ENCODE measurements at regions of chr11 and their contacts with region 1.

Region 1: DNA sequence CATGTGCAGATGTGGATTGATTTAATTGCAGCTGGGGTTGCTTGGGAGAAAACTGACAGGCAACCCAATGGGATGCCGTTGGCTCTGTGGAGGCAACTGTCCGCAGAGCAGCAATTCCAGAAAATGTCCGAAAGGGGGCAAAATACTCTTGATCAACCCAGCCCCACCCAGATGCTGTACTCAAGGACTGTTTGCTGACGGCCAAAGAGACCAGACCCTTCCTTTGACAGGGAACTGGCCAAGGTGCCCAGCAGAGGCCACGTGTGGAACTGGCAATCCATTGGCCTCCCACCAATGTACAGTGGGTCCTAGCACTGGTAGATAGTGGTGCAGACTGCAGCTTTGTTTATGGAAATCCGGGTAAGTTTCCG is 29.7 kb upstream of the KCNA4 start:
- DNase-seq: peak in 1 of 2 experiments; percentile 69
- H3K4me3 ChIP-seq: no peak overlapping the region
- H3K27ac ChIP-seq: no peak overlapping the region
- H3K4me1 ChIP-seq: no peaks in the 10 kb centered on the region
- H3K27me3 ChIP-seq: no peaks in the 10 kb centered on the region
- CTCF ChIP-seq: peak; percentile 59 to 71 (median 62)
- EP300 ChIP-seq: no peak
- POLR2A ChIP-seq: no peak
- RAD21 ChIP-seq: peak; percentile 51 to 65

Region 2: DNA sequence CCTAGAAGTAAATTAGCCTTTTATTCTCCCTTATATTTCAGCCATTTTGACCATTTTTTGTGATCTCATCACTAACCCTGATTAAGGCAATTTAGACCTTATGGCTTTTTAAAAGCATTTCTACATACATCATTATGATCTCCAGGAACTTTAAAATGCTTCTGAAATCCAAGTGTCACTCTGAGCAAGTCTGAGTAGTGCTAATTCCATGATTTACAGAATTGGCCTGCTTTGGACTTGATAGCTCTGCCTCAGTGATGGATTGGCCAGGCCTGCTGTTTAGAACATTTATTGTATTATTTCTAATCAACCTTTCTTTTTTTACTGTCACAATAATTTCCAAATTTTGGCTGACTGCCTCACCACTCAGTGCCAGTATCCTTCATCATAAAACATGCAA is 146.2 kb before region 1 on chr11:
- CTCF ChIA-PET with region 1: no interaction called
- POLR2A ChIA-PET with region 1: no interaction called
- DNase-seq: no peak
- H3K4me3 ChIP-seq: no peak overlapping the region
- H3K27ac ChIP-seq: no peak overlapping the region
- H3K4me1 ChIP-seq: no peaks in the 10 kb centered on the region
- H3K27me3 ChIP-seq: no peaks in the 10 kb centered on the region
- CTCF ChIP-seq: no peak
- EP300 ChIP-seq: no peak
- POLR2A ChIP-seq: no peak
- RAD21 ChIP-seq: no peak

Region 3: GRCh38 chr11:30000986-30001750 is 45.4 kb before region 1 on chr11:
- CTCF ChIA-PET with region 1: no interaction called
- POLR2A ChIA-PET with region 1: no interaction called
- DNase-seq: no peak
- H3K4me3 ChIP-seq: no peak overlapping the region
- H3K27ac ChIP-seq: no peak overlapping the region
- H3K4me1 ChIP-seq: no peaks in the 10 kb centered on the region
- H3K27me3 ChIP-seq: no peaks in the 10 kb centered on the region
- CTCF ChIP-seq: no peak
- EP300 ChIP-seq: no peak
- POLR2A ChIP-seq: no peak
- RAD21 ChIP-seq: no peak

Region 4: DNA sequence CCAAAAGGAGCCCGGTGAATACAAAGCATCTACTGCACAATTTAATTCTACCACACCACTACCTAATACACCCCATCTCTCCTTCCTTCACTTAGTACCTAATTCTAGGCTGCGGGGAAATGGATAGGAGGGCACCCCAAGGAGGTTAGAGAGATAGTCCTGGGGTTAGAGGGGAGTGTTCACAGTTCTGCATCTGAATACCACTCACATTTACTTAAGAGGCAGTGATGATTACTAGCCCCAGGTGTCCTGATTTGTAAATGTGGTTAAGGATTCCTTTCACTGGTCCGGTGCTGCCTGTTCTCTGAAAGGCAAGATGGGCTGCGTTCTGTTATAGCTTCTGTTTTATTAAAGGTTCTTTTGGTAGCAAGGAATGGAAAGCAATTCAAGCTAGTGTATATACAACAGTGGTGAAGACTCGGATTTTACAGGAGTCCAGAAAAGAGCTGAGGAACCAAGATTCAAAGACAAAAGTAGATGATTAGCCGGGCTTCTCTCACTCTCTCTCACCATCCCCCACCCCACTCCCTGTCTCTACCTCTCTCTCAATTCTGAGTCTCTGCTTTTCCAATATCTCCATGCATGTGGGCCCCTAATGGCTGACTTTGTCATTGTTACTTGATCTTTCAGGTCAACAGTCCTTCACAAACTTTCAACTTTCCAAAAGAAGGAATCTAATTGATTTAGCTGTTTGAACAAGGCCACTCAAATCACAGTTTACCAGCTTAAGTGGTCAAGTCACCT is 21.0 kb before region 1 on chr11:
- CTCF ChIA-PET with region 1: interaction called, 12 read pairs
- POLR2A ChIA-PET with region 1: interaction called, 3 read pairs
- DNase-seq: peak in 1 of 2 experiments; percentile 48
- H3K4me3 ChIP-seq: peak overlapping the region in 3 of 4 experiments; percentile 6 to 49 (median 13); a peak in 7 of 8 replicates
- H3K27ac ChIP-seq: no peak overlapping the region
- H3K4me1 ChIP-seq: peaks cover 0 to 7% (median 6%) of the 10 kb centered on the region in 4 experiments; a peak in 3 of 7 replicates
- H3K27me3 ChIP-seq: peaks cover 59 to 97% (median 83%) of the 10 kb centered on the region in 4 experiments
- CTCF ChIP-seq: no peak
- EP300 ChIP-seq: peak in 1 of 2 experiments; percentile 76; a peak in 1 of 3 replicates
- POLR2A ChIP-seq: no peak
- RAD21 ChIP-seq: peak; percentile 3 to 16; a peak in 2 of 4 replicates

Measured in H1 (cell line).